Activated CD4-positive, alpha-beta T cell treated with anti-CD3 and anti-CD28 coated beads, Interleukin-2, amount 10 ng/mL, durations not matched to agents 24 days and 14 days (primary cell): ENCODE measurements at regions of chr7 and their contacts with region 1.

Region 1: GRCh38 chr7:105808703-105809590 is 67.5 kb downstream of the ATXN7L1 start:
- DNase-seq: peak; percentile 93
- H3K4me3 Mint-ChIP-seq: peak overlapping the region; percentile 71
- H3K27ac Mint-ChIP-seq: peak overlapping the region; percentile 92
- H3K4me1 Mint-ChIP-seq: peaks cover 75% of the 10 kb centered on the region
- H3K27me3 Mint-ChIP-seq: peaks cover 2% of the 10 kb centered on the region

Region 2: GRCh38 chr7:104943502-104944343 is 865.2 kb before region 1 on chr7:
- intact Hi-C with region 1: loop called (anchors 10 kb)
- DNase-seq: peak; percentile 93
- H3K4me3 Mint-ChIP-seq: peak overlapping the region; percentile 97
- H3K27ac Mint-ChIP-seq: peak overlapping the region; percentile 100
- H3K4me1 Mint-ChIP-seq: peaks cover 56% of the 10 kb centered on the region
- H3K27me3 Mint-ChIP-seq: peaks cover 3% of the 10 kb centered on the region

Region 3: DNA sequence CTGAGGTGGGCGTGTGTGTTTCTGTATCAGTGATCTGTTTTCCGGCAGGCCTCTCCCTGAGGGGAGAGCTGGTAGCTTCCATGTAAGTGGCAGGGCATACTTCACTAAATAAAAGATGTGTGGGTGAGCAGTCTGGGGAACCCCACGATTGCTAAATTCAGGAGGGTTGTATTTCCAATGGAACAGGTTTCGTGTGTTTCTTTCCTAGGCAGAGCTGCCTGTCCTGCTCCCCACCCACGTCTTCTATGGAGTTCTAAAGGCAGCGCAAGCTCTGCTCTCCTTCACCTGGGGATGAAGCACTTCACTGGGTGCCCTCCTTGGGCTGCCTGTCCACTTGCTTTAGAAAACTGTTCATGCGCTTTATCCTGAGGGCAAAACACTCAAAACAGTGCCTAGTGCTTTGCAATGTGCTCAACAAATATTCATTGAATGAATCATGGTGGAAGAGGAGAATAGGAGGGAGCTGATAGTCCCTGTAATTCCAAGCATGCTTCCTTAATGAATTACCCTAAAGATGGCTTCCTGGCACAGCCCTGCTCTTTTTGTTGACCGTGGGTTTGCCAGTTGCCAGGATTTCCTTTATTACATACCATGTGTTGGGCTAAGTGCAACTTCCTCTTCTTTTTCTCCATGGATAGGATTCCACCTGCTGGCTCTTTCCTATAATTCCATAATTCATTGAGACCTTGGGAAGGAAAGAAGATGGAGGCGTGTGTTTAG is 369.6 kb before region 1 on chr7:
- intact Hi-C with region 1: no loop called
- DNase-seq: no peak
- H3K4me3 Mint-ChIP-seq: no peak overlapping the region
- H3K27ac Mint-ChIP-seq: no peak overlapping the region
- H3K4me1 Mint-ChIP-seq: peaks cover 3% of the 10 kb centered on the region
- H3K27me3 Mint-ChIP-seq: no peaks in the 10 kb centered on the region

Region 4: DNA sequence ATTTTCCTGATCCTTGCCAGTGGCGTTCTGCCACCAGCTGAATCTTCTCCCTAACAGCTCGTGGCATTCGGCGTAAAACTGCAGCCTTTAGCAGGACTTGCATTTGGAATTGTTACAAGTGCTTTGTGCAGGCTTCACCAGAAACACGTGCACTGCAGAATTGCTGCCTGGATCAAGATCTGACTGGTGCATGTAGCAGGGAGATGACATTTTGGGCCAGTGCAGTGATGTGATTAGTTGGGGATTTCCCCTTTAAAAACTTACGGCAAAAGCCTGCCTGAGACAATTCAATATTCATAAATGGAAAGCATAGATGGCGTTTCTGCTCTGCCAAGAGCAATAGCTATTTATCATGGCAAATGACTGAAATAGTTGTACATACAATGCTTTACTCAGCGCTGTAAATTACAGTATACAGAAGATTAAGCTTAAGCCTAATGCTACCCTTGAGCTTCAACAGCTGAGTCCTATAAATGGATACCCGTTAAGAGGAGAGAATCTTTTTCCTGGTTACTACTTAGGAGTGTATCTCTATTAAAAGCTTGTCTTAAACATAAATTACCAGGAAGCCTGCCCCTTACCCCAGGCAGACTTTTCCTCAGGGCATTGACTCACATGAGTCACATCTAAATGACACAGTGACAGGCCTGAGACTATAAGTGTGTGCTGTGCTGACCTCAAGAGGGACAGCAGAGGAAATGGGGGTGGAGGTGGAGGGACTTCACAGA is 38.9 kb before region 1 on chr7:
- intact Hi-C with region 1: loop called (anchors 2 kb)
- DNase-seq: no peak
- H3K4me3 Mint-ChIP-seq: no peak overlapping the region
- H3K27ac Mint-ChIP-seq: no peak overlapping the region
- H3K4me1 Mint-ChIP-seq: peaks cover 16% of the 10 kb centered on the region
- H3K27me3 Mint-ChIP-seq: peaks cover 28% of the 10 kb centered on the region

Region 5: DNA sequence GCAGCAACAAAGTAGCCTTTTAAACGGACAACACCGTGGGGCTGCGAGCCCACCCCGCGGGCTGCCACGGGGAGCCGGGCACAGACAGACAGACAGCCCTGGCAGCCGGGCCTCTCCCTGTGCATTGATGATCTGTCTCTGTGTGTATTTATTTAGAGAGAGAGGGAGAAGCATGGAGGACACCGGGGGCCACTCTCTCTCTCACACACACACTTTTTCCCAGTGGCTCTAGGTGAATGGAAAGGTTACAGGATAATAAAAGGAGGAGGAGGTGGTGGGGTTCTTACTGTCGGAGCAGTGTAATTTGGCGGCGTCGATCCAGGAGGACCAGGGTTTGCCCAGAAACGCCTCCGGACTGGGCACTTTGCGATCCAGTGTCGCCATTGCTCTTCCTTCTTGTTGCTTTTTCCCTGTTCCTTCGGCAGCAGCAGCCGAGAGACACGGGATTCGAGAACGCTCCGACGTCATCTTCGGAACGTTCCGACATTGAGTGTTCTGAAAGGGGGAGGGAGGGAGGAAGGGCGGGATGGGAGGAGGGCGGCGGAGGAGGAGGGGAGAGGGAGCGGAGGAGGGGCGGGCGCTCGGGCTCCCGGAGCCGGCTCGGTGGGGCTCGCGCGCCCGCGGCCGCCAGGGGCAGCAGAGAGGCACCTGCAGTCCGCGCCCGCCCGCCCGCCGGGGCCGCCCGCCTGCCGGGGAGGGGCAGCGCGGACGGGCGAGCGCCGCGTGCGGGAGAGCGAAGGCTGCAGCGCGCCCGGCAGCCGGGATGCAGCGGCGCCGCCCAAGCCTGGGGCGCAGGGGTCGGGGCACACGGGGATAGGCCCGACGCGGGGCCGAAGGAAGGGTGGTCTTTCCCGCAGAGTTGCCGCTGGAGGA is 67.4 kb after region 1 on chr7 and contains the start of gene ATXN7L1:
- intact Hi-C with region 1: loop called (anchors 1 kb)
- DNase-seq: peak; percentile 96
- H3K4me3 Mint-ChIP-seq: peak within 1 kb of the TSS; percentile 91
- H3K27ac Mint-ChIP-seq: peak within 1 kb of the TSS; percentile 82
- H3K4me1 Mint-ChIP-seq: peaks cover 35% of the 10 kb centered on the region
- H3K27me3 Mint-ChIP-seq: peaks cover 39% of the 10 kb centered on the region
- total RNA-seq, gene ATXN7L1: 8.5 and 9.8 TPM in 2 replicates

Region 6: GRCh38 chr7:105952917-105953595 is 144.1 kb after region 1 on chr7:
- intact Hi-C with region 1: no loop called
- DNase-seq: no peak
- H3K4me3 Mint-ChIP-seq: no peak overlapping the region
- H3K27ac Mint-ChIP-seq: no peak overlapping the region
- H3K4me1 Mint-ChIP-seq: no peaks in the 10 kb centered on the region
- H3K27me3 Mint-ChIP-seq: no peaks in the 10 kb centered on the region

Region 7: DNA sequence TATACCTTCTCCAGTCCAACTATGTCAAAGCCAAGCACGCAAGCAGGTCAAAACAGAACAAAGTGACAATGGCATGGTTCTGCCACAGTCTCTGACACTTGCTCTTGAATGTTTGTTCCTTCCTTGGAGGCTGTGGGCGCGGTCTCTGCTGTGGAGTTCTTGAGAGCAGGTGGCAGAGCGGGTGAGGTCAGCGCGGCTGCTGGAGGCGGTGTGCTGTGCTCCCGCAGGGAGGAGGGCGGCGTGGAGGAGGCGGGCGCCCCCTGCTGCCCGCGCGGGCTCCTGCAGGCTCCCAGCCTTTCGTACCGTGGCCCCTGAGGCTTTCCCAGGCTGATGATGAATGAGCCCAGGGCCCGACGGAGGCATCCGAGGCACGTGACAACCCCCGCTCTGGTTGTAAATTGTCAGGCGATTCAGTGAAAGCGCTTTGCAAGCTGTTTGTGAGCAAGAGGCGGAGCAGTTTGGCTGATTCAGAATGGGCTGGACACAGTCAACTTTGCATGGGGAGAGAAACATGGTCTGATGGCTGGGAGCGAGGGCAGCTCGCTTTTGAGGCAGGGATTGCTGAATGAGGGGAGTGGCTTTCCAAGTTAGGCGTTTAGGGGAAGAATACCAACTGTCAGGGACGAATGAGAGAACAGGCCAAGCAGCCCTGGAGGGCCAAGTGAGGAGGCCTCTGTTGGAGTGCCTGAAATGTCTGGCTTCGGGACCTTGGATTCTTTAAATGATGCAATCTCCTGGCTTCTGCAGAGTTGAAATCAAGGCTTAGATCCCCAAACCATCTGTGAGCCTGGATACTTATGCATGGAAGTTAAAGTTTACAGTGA is 200.7 kb after region 1 on chr7:
- intact Hi-C with region 1: loop called (anchors 1 kb)
- DNase-seq: peak; percentile 94
- H3K4me3 Mint-ChIP-seq: no peak overlapping the region
- H3K27ac Mint-ChIP-seq: no peak overlapping the region
- H3K4me1 Mint-ChIP-seq: peaks cover 10% of the 10 kb centered on the region
- H3K27me3 Mint-ChIP-seq: peaks cover 50% of the 10 kb centered on the region

Region 8: GRCh38 chr7:106285051-106285854 is 476.3 kb after region 1 on chr7:
- intact Hi-C with region 1: loop called (anchors 10 kb)
- DNase-seq: peak; percentile 99
- H3K4me3 Mint-ChIP-seq: peak overlapping the region; percentile 93
- H3K27ac Mint-ChIP-seq: peak overlapping the region; percentile 99
- H3K4me1 Mint-ChIP-seq: peaks cover 32% of the 10 kb centered on the region
- H3K27me3 Mint-ChIP-seq: no peaks in the 10 kb centered on the region